ENCODE measurements at regions of chr10 and their contacts with region 1.

Region 1: DNA sequence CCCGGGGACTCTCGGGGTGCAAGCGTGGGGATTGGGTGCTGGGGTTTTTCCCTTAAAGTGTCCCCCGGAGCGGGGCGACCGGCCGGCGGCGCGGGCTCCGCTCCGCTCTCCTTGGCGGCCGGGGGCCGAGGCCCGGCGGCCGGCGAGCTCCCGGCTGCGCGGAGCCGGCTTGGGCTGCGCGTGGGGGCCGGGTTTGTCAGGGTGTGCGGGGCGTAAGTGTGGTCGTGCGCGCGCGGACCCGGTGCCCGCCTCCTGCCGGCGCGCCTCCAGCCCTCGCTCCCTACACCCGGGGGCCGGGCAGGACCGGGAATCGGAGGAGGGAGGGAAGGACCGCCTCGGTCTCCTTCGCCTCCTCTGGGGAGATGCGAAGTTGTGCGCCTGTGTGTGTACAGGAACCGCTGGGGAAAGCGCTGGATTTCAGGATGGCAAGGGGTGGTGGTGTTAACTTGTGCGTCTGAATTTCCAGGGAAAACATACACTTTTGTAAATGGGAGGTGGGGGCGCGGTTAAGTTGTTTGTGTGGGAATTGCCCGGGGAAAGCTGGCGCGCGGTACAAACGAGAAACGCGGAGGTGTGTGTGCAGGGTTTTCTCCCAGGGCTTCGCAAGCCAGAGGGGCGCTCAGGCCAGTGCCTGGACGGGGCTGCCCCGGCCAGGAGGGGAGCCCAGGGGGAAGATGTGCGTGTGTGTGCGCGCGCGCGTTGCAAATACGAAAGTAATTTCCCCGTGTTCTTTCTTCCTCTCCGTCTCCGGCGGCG is 737 bp downstream of the ZMIZ1 start:
- DNase-seq: no peak
- H3K4me3 ChIP-seq: peak overlapping the region; percentile 98
- CTCF ChIP-seq: peak; percentile 1

Region 2: DNA sequence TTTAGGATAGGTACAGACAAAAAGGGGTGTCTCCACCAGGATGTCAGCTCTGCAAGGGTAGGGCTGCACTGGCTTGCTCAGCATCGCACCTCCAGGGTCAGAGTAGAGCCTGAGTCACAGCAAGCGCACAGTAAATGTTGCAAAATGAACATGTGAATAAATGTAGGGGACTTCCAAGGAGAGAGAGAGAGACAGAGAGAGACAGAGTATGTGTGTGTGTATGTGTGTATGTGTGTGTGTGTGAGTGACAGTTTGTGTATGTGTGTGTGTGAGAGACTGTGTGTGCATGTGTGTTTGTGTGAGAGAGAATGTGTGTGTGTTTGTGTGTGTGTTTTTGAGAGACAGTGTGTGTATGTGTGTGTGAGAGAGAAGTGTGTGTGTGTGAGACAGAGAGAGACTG is 872.5 kb before region 1 on chr10:
- in situ Hi-C with region 1: loop called (anchors 10 kb)
- DNase-seq: no peak
- H3K4me3 ChIP-seq: no peak overlapping the region
- CTCF ChIP-seq: no peak

Region 3: DNA sequence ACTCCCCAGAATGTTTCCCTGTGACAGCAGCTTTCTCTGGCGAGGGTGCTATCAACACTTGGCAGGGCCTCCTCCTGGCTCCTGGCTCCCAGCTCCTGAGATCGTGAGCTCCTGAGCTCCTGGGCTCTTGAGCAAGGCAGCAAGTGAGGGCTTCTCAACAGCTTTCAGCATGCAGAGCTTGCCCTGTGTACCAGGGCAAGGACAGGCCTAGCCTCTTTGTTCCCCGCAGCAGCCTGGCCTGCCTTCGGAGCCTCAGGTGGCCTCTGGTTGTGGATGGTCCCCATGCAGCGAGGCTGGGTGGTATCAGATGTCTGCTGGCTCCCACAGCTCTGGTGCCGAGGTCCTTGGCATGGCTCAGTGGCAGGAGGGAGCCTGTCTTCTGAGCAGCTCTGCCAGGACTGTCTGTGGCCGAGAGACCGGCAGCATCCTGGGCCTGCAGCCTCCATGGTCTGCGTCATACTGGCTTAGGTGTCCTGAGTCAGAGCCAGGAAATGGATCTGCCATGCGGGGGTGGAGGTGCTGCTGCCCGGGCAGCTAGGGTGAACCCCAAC is 43.5 kb after region 1 on chr10:
- in situ Hi-C with region 1: loop called (anchors 5 kb)
- DNase-seq: no peak
- H3K4me3 ChIP-seq: no peak overlapping the region
- CTCF ChIP-seq: no peak